Gastrocnemius medialis (tissue), 4 donors: ENCODE measurements at regions of chr13 and their contacts with region 1.

Region 1: GRCh38 chr13:51552027-51552426 is 32.2 kb upstream of the WDFY2 start:
- DNase-seq: no peak
- ATAC-seq: no peak
- H3K4me3 ChIP-seq: no peak overlapping the region
- H3K27ac ChIP-seq: no peak overlapping the region
- H3K4me1 ChIP-seq: no peaks in the 10 kb centered on the region
- H3K27me3 ChIP-seq: no peaks in the 10 kb centered on the region
- CTCF ChIP-seq: no peak
- POLR2A ChIP-seq: no peak

Region 2: DNA sequence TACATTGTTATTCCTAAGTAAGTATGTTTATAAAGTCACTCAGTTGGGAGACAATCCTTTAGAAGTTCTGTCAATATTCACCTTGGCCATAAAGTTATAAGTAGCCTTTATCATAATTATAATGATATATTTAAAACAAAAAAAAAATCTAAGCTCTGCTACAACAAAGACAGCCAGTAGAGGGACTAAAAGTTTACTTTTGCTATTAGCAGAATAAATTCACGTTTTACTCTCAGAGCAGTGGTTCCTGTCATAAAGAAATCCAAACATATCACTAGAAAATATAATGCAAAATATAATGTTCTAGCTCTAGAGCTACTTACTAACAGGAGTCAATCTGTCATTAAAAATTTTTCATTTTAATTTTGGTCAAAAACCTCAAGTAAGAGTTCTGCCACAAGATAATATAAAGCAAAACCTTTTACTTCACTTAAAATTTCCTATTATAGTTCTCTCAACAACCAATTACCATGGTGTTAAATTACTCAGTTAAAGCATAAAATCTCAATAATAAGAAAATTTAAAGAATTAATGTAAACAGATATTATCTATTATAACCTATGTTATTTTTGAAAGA is 116.9 kb before region 1 on chr13:
- in situ Hi-C with region 1: no loop called
- intact Hi-C with region 1: no loop called
- DNase-seq: no peak
- ATAC-seq: no peak
- H3K4me3 ChIP-seq: no peak overlapping the region
- H3K27ac ChIP-seq: no peak overlapping the region
- H3K4me1 ChIP-seq: peaks cover 5 to 8% of the 10 kb centered on the region in 2 donors
- H3K27me3 ChIP-seq: no peaks in the 10 kb centered on the region
- CTCF ChIP-seq: peak in 3 of 5 experiments; percentile 29 to 47 (median 47)
- POLR2A ChIP-seq: no peak

Region 3: GRCh38 chr13:51605698-51606097 is 53.7 kb after region 1 on chr13:
- in situ Hi-C with region 1: no loop called
- intact Hi-C with region 1: loop called (anchors 2 kb)
- DNase-seq: no peak
- ATAC-seq: no peak
- H3K4me3 ChIP-seq: no peak overlapping the region
- H3K27ac ChIP-seq: no peak overlapping the region
- H3K4me1 ChIP-seq: peaks cover 0 to 5% of the 10 kb centered on the region in 2 donors
- H3K27me3 ChIP-seq: no peaks in the 10 kb centered on the region
- CTCF ChIP-seq: no peak
- POLR2A ChIP-seq: no peak